ENCODE measurements at regions of chr12 and their contacts with region 1.

Region 1: DNA sequence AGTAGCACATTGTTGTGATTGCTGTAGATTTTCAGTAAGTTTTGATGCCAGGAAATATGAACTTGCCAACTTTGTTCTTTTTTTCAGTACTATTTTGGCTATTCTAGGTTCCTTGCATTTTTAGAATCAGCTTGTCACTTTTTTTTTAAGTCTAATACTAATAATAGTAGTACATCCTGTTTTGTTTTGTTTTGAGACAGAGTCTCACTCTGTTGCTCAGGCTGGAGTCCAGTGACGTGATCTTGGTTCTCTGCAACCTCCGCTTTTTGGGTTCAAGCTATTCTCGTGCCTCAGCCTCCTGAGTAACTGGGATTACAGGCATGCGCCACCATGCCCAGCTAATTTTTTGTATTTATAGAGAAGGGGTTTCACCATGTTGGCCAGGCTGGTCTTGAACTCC is 16.5 kb downstream of the PWP1 start:
- DNase-seq: no peak
- H3K4me3 ChIP-seq: no peak overlapping the region
- H3K27ac ChIP-seq: no peak overlapping the region
- H3K4me1 ChIP-seq: no peaks in the 10 kb centered on the region
- H3K27me3 ChIP-seq: no peaks in the 10 kb centered on the region
- CTCF ChIP-seq: no peak
- EP300 ChIP-seq: no peak
- POLR2A ChIP-seq: no peak

Region 2: DNA sequence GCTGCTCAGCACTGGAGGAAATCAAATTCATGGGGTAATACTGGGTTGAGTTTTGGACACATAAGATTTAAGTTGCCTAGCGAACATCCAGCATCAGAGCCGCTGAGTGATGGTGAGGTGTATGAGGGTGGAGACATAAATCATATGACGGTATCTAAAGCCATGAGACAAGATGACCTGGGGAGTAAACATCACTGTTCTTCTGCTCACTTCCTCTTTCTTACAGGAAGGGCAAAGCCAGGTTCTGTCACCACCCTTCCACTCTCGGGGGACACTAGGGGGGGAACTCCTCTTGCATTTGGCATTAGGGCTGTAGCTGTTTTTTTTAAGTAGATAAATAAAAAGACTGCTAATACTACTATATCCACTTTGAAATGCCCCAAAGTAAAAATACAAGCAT is 34.8 kb after region 1 on chr12:
- intact Hi-C with region 1: loop called (anchors 5 kb)
- DNase-seq: no peak
- H3K4me3 ChIP-seq: no peak overlapping the region
- H3K27ac ChIP-seq: no peak overlapping the region
- H3K4me1 ChIP-seq: no peaks in the 10 kb centered on the region
- H3K27me3 ChIP-seq: no peaks in the 10 kb centered on the region
- CTCF ChIP-seq: no peak
- EP300 ChIP-seq: no peak
- POLR2A ChIP-seq: no peak

Region 3: DNA sequence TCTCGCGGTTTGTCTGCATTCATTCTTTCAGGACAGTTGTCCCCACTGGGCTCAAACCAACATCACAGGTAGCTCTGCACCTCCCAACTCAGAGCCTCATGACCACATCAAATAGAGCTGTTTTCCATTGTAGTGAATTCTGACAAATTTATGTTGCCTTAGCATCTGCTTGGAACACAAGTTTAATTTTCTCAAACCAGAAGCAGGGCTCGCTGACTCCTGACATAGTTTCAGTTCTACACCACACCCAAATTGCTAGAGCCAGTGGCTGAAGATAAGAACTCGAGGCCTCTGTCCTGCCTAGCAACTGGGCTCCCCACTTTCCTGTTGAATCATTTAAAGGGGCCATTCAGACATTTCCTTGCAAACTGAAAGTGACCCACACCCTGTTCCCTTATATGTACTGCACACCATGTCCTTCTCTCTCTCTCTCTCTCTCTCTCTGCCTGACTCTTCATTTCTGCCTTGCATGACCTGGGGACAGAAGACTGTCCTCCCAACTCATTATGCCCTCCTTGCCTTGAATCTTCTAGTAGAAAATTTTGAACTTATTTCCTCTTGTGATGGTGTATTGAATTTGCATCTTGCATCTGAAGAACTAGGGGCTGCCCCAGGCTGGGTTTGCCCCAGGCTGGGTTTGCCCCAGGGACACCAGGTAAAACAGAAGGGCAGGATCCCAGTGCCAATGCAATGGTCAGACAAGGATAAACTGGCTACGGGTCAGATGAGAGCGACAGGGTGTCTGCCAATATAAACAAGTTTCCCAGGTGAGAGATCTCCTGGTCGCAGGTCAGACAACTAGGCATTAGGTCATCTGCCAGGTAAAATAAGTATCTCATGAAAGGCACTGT is 417.2 kb after region 1 on chr12:
- intact Hi-C with region 1: no loop called
- DNase-seq: no peak
- H3K4me3 ChIP-seq: no peak overlapping the region
- H3K27ac ChIP-seq: peak overlapping the region in 2 of 4 donors; percentile 51 to 54
- H3K4me1 ChIP-seq: peaks cover 0 to 44% (median 15%) of the 10 kb centered on the region in 4 donors
- H3K27me3 ChIP-seq: no peaks in the 10 kb centered on the region
- CTCF ChIP-seq: no peak
- EP300 ChIP-seq: no peak
- POLR2A ChIP-seq: no peak

Measured in sigmoid colon (tissue), 7 donors.